ENCODE measurements at regions of chr9 and their contacts with region 1.

Region 1: DNA sequence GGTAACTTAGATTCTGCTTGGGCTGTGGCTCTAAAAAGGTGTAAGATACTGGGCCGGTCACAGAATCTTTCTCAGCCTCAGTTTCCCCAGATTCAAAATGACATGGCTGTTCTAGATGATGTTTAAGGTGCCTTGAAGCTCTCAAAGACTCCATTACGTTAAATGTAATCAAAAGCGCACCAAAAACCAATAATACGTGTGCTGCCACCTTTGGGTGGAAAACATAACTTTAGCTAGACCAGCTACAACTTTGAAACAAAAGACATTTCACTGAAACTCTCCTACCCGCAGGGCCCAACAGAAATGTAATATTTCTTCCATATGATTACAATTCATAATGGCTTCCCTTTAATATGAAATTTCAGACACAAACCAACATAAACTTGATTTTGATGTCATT is 35.0 kb upstream of the PCSK5 start:
- DNase-seq: no peak
- ATAC-seq: peak; percentile 65

Region 2: GRCh38 chr9:75265525-75265972 is 590.0 kb before region 1 on chr9:
- intact Hi-C with region 1: loop called (anchors 5 kb)
- DNase-seq: no peak
- ATAC-seq: peak; percentile 75

Region 3: GRCh38 chr9:75333624-75334023 is 521.9 kb before region 1 on chr9:
- intact Hi-C with region 1: loop called (anchors 5 kb)
- DNase-seq: no peak
- ATAC-seq: peak; percentile 46

Region 4: DNA sequence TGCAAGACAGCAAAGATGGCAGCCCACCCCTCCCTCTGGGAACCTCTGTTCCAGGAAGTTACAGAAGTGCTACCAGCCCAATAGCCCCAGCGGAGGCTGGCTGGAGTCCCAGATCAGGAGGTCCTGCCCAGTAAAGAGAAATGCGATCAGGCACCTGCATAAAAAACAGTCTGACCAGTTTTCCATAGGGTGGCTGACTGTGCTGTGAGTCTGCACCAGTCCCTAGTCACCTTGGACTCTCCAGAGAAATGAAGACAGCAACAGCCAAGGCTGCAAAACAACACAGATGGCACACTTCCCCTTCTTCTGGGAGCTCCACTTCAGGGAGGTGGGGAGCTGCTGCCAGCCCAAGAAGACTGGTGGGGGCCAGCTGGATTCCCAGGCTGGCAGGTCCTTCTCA is 230.5 kb before region 1 on chr9:
- intact Hi-C with region 1: loop called (anchors 5 kb)
- DNase-seq: no peak
- ATAC-seq: peak; percentile 55